IMR-90 (cell line): ENCODE measurements at regions of chr4 and their contacts with region 1.

Region 1: DNA sequence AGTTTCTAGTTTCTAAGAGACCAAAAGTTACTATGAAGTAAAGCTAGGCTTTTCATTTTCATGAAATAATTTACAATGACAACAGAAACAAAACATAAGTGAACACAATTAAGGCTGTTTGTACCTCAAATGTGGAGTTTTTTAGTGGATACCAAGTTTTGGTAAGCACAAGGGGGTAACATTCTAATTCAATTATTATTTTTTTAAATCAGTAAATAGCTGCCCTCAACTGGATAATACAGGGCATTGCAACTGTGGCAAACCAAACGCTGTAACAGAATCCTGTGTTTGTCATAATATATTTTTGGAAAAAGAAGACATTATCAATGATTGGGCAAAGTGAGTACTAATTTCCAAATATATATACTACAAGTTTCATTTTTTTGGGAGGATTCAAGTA is 150.3 kb downstream of the FBXW7 start:
- DNase-seq: peak; percentile 31
- ATAC-seq: peak; percentile 80
- H3K4me3 ChIP-seq: no peak overlapping the region
- H3K27ac ChIP-seq: no peak overlapping the region
- H3K4me1 ChIP-seq: no peaks in the 10 kb centered on the region; the same call in 1 of the 2 replicates
- H3K27me3 ChIP-seq: no peaks in the 10 kb centered on the region
- CTCF ChIP-seq: peak; percentile 59
- POLR2A ChIP-seq: no peak
- RAD21 ChIP-seq: peak; percentile 54

Region 2: GRCh38 chr4:151997461-151997860 is 388.1 kb before region 1 on chr4:
- CTCF ChIA-PET with region 1: no interaction called
- POLR2A ChIA-PET with region 1: interaction called, 18 read pairs
- dilution Hi-C with region 1: no loop called
- in situ Hi-C with region 1: no loop called
- intact Hi-C with region 1: no loop called
- DNase-seq: no peak
- ATAC-seq: no peak
- H3K4me3 ChIP-seq: no peak overlapping the region
- H3K27ac ChIP-seq: no peak overlapping the region
- H3K4me1 ChIP-seq: no peaks in the 10 kb centered on the region
- H3K27me3 ChIP-seq: no peaks in the 10 kb centered on the region; the same call in none of the 2 replicates
- CTCF ChIP-seq: no peak
- POLR2A ChIP-seq: no peak
- RAD21 ChIP-seq: no peak

Region 3: GRCh38 chr4:152106113-152106763 is 279.3 kb before region 1 on chr4:
- CTCF ChIA-PET with region 1: no interaction called
- POLR2A ChIA-PET with region 1: no interaction called
- dilution Hi-C with region 1: no loop called
- in situ Hi-C with region 1: no loop called
- intact Hi-C with region 1: loop called (anchors 10 kb)
- DNase-seq: peak; percentile 97
- ATAC-seq: peak; percentile 86
- H3K4me3 ChIP-seq: no peak overlapping the region
- H3K27ac ChIP-seq: peak overlapping the region; percentile 33; the same call in 1 of the 2 replicates
- H3K4me1 ChIP-seq: peaks cover 9% of the 10 kb centered on the region
- H3K27me3 ChIP-seq: no peaks in the 10 kb centered on the region
- CTCF ChIP-seq: no peak
- POLR2A ChIP-seq: no peak
- RAD21 ChIP-seq: no peak

Region 4: GRCh38 chr4:152535903-152536544 is 150.5 kb after region 1 on chr4 and contains the start of gene FBXW7:
- CTCF ChIA-PET with region 1: no interaction called
- POLR2A ChIA-PET with region 1: no interaction called
- dilution Hi-C with region 1: no loop called
- in situ Hi-C with region 1: no loop called
- intact Hi-C with region 1: no loop called
- DNase-seq: peak; percentile 99
- ATAC-seq: peak; percentile 90
- H3K4me3 ChIP-seq: peak within 1 kb of the TSS; percentile 88
- H3K27ac ChIP-seq: peak within 1 kb of the TSS; percentile 76
- H3K4me1 ChIP-seq: peaks cover 3% of the 10 kb centered on the region; the same call in 1 of the 2 replicates
- H3K27me3 ChIP-seq: no peaks in the 10 kb centered on the region
- CTCF ChIP-seq: no peak
- POLR2A ChIP-seq: peak; percentile 87
- RAD21 ChIP-seq: no peak
- total RNA-seq, gene FBXW7: 27.4 and 64.7 TPM in 2 replicates